ENCODE measurements at regions of chr4 and their contacts with region 1.

Region 1: GRCh38 chr4:52051619-52052474 is 743 bp downstream of the SPATA18 start:
- DNase-seq: peak; percentile 82
- H3K4me3 ChIP-seq: peak overlapping the region; percentile 34 to 67 (median 53)
- H3K27ac ChIP-seq: peak overlapping the region; percentile 66 to 79 (median 68)
- H3K4me1 ChIP-seq: peaks cover 0 to 17% (median 7%) of the 10 kb centered on the region in 4 donors
- H3K27me3 ChIP-seq: peaks cover 30% of the 10 kb centered on the region
- CTCF ChIP-seq: no peak
- EP300 ChIP-seq: no peak
- POLR2A ChIP-seq: no peak

Region 2: DNA sequence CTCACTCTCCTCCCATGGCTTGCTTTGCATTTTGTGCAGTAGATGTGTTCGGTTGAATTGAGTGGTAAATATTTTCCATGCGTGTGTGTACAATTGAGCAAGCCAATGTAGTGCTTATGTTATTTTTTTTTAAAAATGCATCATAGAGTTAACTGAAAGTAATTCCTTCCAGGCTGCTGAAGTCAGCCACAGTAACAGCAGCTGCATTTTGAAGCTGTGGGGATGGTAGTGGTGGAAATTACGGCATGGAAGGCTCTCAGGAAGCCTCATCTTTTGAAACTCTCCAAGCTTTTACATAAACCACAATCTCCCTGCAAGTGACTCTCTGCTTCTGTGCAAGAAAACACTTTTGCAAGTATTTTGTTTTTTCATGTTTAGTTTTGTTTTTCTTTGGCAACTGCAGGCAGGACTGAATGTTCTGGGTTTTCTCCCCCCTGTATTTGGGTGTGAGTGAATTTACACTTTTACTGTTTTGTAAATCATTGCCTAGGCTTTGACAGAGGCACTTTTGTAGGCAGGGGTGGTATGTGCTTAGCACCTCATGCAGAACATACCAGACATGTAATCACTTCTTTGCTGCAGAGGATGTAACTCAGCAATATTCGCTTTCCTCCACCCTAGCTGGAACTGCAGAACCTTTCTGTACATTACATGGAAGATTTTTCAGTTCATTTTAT is 87.9 kb before region 1 on chr4:
- in situ Hi-C with region 1: loop called in 1 of 4 experiments (anchors 25 kb)
- intact Hi-C with region 1: no loop called
- DNase-seq: no peak
- H3K4me3 ChIP-seq: no peak overlapping the region
- H3K27ac ChIP-seq: peak overlapping the region in 1 of 4 donors; percentile 13
- H3K4me1 ChIP-seq: peaks cover 0 to 4% (median 2%) of the 10 kb centered on the region in 4 donors
- H3K27me3 ChIP-seq: no peaks in the 10 kb centered on the region
- CTCF ChIP-seq: no peak
- EP300 ChIP-seq: no peak
- POLR2A ChIP-seq: no peak

Measured in transverse colon (tissue), 4 donors.